Panc1 (cell line): ENCODE measurements at regions of chr19 and their contacts with region 1.

Region 1: GRCh38 chr19:17282488-17283255 is 971 bp downstream of the ANKLE1 start:
- DNase-seq: no peak
- ATAC-seq: peak; percentile 97
- H3K4me3 ChIP-seq: peak overlapping the region; percentile 29 to 44
- H3K27ac ChIP-seq: no peak overlapping the region
- H3K4me1 ChIP-seq: no peaks in the 10 kb centered on the region
- H3K27me3 ChIP-seq: no peaks in the 10 kb centered on the region
- CTCF ChIP-seq: peak; percentile 91

Region 2: GRCh38 chr19:17226002-17226933 is 56.4 kb before region 1 on chr19 and contains the start of gene OCEL1:
- CTCF ChIA-PET with region 1: no interaction called
- POLR2A ChIA-PET with region 1: no interaction called
- in situ Hi-C with region 1: no loop called
- intact Hi-C with region 1: loop called (anchors 10 kb)
- DNase-seq: peak; percentile 73
- ATAC-seq: peak; percentile 91
- H3K4me3 ChIP-seq: peak within 1 kb of the TSS; percentile 61 to 76
- H3K27ac ChIP-seq: peak within 1 kb of the TSS; percentile 72
- H3K4me1 ChIP-seq: peaks cover 4% of the 10 kb centered on the region
- H3K27me3 ChIP-seq: no peaks in the 10 kb centered on the region
- CTCF ChIP-seq: no peak
- total RNA-seq, gene OCEL1: 37.1 TPM

Region 3: DNA sequence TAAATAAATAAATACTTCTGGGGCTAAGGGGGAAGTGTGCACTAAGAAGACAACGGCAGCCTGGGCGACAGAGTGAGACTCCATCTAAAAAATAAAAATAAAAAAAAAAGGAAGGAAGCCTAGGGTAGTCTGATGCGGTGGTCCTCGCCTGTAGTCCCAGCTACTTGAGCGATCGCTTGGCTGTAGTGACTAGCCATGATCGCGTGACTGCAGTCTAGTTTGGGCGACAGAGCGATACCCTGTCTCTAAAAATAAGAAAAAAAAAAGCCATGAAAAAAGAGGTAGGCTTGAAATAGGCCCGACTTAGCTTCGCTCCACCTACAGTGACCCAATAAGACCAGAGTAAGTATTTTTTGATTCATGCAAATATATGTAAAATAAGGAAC is 16.1 kb before region 1 on chr19:
- CTCF ChIA-PET with region 1: interaction called, 10 read pairs
- POLR2A ChIA-PET with region 1: no interaction called
- in situ Hi-C with region 1: no loop called
- intact Hi-C with region 1: no loop called
- DNase-seq: no peak
- ATAC-seq: no peak
- H3K4me3 ChIP-seq: 0 out of 4 replicates have a peak overlapping the region, but pooled peaks of 1 of the 2 experiments have one; percentile 7
- H3K27ac ChIP-seq: peak overlapping the region; percentile 34; the same call in 1 of the 2 replicates
- H3K4me1 ChIP-seq: no peaks in the 10 kb centered on the region
- H3K27me3 ChIP-seq: no peaks in the 10 kb centered on the region
- CTCF ChIP-seq: no peak

Region 4: GRCh38 chr19:18700501-18701249 is 1418.0 kb after region 1 on chr19:
- CTCF ChIA-PET with region 1: no interaction called
- POLR2A ChIA-PET with region 1: no interaction called
- in situ Hi-C with region 1: no loop called
- intact Hi-C with region 1: no loop called
- DNase-seq: no peak
- ATAC-seq: peak; percentile 96
- H3K4me3 ChIP-seq: peak overlapping the region; percentile 42 to 72
- H3K27ac ChIP-seq: peak overlapping the region; percentile 48; the same call in 1 of the 2 replicates
- H3K4me1 ChIP-seq: peaks cover 21% of the 10 kb centered on the region
- H3K27me3 ChIP-seq: no peaks in the 10 kb centered on the region
- CTCF ChIP-seq: no peak